AG04450 (cell line): ENCODE measurements at regions of chr22 and their contacts with region 1.

Region 1: DNA sequence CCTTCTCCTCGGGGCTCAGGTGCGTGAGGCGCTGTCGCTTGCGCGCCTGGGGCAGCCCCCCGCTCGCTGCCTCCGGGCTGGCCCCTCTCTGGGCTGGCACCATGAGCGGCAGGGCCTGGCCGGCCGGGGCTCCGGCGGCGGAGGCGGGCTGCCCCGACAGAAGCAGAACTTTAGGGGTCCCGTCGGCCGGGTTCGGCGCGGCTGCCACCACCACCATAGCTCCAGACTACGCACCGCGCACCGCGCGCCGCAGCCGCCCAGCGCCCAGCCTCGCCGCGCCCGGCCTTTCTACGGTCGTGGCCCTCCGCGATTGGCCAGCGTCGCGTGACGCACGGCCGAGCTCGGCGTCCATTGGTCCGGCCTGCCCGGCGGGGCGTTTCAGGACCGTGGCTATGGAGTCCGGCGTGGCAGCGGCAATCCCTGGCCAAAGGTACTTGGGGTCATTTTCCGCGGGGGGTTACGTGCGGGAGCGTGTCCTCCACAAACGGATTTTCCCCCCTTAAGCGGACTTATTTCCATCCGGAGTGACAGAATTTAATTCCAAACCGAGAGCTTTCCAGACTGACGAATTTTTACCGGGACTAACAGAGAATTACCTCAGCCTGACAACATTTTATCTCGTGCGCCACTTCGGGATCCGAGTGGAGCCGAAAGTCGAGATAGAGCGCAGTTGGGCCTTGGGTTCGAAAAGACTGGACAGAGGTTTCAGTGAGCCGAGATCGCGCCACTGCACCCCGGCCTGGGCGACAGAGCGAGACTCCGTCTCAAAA is at the start of gene XBP1:
- DNase-seq: peak; percentile 84
- H3K4me3 ChIP-seq: peak within 1 kb of the TSS; percentile 73
- H3K27ac ChIP-seq: peak within 1 kb of the TSS; percentile 100
- H3K27me3 ChIP-seq: no peaks in the 10 kb centered on the region
- CTCF ChIP-seq: no peak
- polyA plus RNA-seq, gene XBP1: 193 and 205 TPM in 2 replicates

Region 2: GRCh38 chr22:27885977-27886842 is 914.3 kb before region 1 on chr22:
- CTCF ChIA-PET with region 1: no interaction called
- POLR2A ChIA-PET with region 1: interaction called, 18 read pairs
- DNase-seq: peak; percentile 91
- H3K4me3 ChIP-seq: no peak overlapping the region
- H3K27ac ChIP-seq: peak overlapping the region; percentile 92
- H3K27me3 ChIP-seq: no peaks in the 10 kb centered on the region
- CTCF ChIP-seq: peak; percentile 82

Region 3: GRCh38 chr22:28600546-28601143 is 199.8 kb before region 1 on chr22:
- CTCF ChIA-PET with region 1: interaction called, 4 read pairs
- POLR2A ChIA-PET with region 1: interaction called, 11 read pairs
- DNase-seq: peak; percentile 30
- H3K4me3 ChIP-seq: no peak overlapping the region
- H3K27ac ChIP-seq: no peak overlapping the region
- H3K27me3 ChIP-seq: no peaks in the 10 kb centered on the region
- CTCF ChIP-seq: peak; percentile 44

Region 4: DNA sequence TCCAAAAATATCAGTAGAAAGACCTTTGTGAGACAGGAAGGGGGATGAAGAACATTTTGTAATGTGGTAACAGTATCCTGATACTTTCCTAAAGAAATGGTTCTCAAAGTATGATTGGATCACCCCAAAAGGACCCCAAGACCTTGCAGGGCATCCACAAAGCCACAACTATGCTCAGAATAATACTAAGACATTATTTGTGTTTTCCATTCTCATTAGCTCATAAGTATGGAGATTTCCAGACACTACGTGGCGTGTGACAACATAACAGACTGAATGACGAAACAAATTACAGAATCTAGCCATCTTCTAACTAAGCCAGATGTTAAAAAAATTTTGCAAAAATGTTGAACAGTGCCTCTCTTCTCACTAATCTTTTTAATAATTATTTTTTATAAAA is 83.8 kb before region 1 on chr22:
- CTCF ChIA-PET with region 1: no interaction called
- POLR2A ChIA-PET with region 1: interaction called, 12 read pairs
- DNase-seq: no peak
- H3K4me3 ChIP-seq: no peak overlapping the region
- H3K27ac ChIP-seq: no peak overlapping the region
- H3K27me3 ChIP-seq: no peaks in the 10 kb centered on the region
- CTCF ChIP-seq: no peak

Region 5: DNA sequence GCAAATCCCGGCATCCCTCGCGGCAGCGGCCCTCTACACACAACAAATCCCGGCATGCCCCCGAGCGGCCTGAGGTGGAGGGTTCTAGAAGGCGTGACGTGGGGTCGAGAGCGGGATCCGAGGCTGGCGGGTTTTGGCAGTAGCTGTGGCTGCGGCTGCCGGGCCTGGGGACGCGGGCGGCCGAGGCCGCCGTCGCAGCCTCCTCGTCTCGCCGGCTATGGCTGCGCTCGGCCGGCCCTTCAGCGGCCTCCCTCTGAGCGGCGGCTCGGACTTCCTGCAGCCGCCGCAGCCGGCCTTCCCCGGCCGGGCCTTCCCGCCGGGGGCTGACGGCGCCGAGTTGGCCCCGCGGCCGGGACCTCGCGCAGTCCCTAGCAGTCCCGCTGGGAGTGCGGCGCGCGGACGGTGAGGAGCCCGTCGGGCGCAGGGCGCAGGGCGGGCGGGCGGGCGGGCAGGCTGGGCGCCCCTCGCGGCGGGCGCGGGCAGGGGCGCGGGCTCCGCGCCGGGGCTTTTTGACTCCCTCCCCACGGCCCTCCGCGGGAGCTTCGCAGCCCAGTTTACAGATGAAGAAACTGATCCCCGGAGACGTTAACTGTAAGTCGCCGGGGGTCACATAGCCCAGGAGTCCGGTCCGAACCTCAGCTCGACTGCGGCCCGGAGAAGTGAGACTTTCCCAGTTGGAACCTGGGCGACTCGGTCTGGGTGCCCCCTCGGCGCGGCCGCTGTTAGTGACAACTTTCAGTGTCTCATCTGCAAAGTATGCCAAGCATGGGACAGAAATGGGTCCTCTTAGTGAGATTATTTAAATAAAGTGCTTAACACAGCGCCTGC is 27.6 kb before region 1 on chr22 and contains the start of gene CCDC117:
- CTCF ChIA-PET with region 1: no interaction called
- POLR2A ChIA-PET with region 1: interaction called, 11 read pairs
- DNase-seq: peak; percentile 87
- H3K4me3 ChIP-seq: peak within 1 kb of the TSS; percentile 87
- H3K27ac ChIP-seq: peak within 1 kb of the TSS; percentile 85
- H3K27me3 ChIP-seq: no peaks in the 10 kb centered on the region
- CTCF ChIP-seq: peak; percentile 22; the same call in 1 of the 2 replicates
- polyA plus RNA-seq, gene CCDC117: 15.0 and 24.4 TPM in 2 replicates

Region 6: DNA sequence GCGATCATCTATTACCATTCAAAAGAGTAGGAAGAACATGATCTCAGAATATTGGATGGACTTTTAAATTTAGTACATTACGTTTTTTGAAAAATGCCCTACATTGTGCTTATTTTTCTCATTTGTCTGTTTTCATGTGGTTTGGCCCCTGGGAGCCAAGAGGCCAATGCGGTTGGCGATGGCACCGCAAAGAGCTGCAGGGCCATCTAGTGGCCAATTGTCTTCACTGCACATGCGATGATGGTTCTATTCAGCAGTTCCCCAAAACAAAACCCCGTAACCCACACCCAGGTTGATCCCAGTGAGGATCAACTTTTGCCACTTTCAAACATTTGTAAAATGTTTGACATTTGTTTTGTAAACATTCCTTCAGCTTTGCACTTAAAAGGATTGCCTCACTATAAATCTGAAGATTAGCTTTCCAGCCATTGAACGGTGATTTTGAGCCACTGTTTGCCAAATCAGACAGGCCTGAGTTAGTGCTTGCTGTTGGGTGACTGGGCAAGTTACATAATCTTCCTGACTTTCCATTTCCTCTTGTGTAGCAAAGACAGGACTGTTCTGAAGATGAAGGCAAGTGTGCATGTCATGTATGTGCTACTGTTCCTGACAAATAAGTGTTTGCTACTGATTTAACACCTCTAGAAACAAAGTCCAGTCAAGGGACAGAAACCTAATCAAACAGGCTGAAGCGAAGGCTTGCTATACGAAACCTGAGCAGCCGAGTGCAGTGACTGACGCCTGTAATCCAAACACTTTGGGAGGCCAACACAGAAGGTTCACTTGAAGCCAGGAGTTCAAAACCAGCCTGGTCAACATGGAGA is 29.1 kb after region 1 on chr22:
- CTCF ChIA-PET with region 1: interaction called, 7 read pairs
- POLR2A ChIA-PET with region 1: interaction called, 11 read pairs
- DNase-seq: peak; percentile 53
- H3K4me3 ChIP-seq: no peak overlapping the region
- H3K27ac ChIP-seq: no peak overlapping the region
- H3K27me3 ChIP-seq: no peaks in the 10 kb centered on the region
- CTCF ChIP-seq: peak; percentile 97